WTC11 (cell line): ENCODE measurements at regions of chr12 and their contacts with region 1.

Region 1: GRCh38 chr12:52156736-52157565 is 34.9 kb downstream of the KRT80 start:
- DNase-seq: peak; percentile 94
- ATAC-seq: peak; percentile 88
- H3K4me3 Mint-ChIP-seq: no peak overlapping the region
- H3K27ac Mint-ChIP-seq: no peak overlapping the region
- H3K4me1 Mint-ChIP-seq: no peaks in the 10 kb centered on the region
- H3K27me3 Mint-ChIP-seq: no peaks in the 10 kb centered on the region
- CTCF ChIP-seq: peak; percentile 97

Region 2: DNA sequence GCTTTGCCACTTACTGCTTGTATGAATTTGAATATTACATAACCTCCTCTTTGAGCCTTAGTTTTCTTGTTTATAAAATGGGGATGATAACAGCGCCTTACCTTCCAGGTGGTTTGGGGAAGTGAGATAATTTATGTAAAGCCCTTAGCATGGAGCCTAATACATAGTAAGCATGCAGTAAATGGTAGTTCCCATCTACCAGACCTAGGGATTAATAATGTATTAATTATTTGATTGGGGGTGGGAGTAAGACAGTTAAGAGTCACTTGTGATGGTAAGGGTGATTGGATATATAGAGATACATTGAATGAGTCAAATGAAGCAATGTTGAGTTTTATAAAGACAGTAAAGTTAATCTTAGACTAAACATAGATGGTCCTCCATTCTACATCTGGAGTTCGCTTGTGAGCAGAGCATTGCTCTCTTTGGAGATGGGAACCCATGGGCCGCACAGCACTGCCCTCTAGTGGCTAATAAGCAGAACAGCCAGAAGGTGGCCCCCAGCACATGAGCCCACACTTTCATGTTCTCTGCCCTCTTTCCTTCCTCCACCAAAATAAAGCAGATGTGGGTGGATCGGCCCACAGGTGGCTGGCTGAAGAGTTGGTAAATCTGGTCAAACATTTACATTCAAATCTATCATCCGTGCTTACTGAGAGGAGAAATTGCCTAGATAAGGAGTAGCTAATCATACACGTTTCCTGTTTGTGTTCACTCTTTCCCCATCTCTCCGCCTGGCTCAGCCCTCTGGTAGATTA is 176.7 kb before region 1 on chr12:
- CTCF ChIA-PET with region 1: no interaction called
- POLR2A ChIA-PET with region 1: no interaction called
- DNase-seq: peak; percentile 68
- ATAC-seq: peak; percentile 96
- H3K4me3 Mint-ChIP-seq: no peak overlapping the region
- H3K27ac Mint-ChIP-seq: no peak overlapping the region
- H3K4me1 Mint-ChIP-seq: no peaks in the 10 kb centered on the region; the same call in 1 of the 2 replicates
- H3K27me3 Mint-ChIP-seq: no peaks in the 10 kb centered on the region
- CTCF ChIP-seq: peak; percentile 84

Region 3: DNA sequence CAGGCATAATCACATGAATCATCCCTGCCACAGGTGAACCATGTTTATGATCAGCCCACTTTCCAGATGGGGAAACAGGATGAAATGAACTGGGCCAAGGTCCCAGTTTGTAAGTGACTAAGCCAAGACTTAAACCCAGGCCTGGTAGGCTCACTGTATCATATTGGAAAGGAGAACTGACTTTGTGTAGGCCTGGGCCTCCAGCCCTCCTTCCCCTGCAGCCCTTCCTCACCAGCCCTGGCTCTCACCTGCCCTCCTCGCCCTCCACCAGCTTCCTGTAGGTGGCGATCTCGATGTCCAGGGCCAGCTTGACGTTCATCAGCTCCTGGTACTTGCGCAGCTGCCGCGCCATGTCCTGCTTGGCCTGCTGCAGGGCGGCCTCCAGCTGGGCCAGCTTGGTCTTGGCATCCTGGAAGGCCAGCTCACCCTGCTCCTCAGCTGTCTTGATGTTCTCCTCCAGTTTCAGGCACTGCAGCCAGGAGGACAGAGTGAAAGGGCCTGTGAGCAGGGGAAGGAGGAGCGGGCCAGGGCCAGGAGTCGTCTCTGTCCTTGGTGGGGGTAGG is 15.1 kb after region 1 on chr12:
- CTCF ChIA-PET with region 1: interaction called, 25 read pairs
- POLR2A ChIA-PET with region 1: no interaction called
- DNase-seq: peak; percentile 79
- ATAC-seq: peak; percentile 71
- H3K4me3 Mint-ChIP-seq: no peak overlapping the region
- H3K27ac Mint-ChIP-seq: no peak overlapping the region
- H3K4me1 Mint-ChIP-seq: peaks cover 9% of the 10 kb centered on the region
- H3K27me3 Mint-ChIP-seq: no peaks in the 10 kb centered on the region
- CTCF ChIP-seq: 0 out of 2 replicates have a peak, but pooled peaks have one; percentile 25

Region 4: GRCh38 chr12:52207895-52208294 is 50.9 kb after region 1 on chr12:
- CTCF ChIA-PET with region 1: interaction called, 60 read pairs
- POLR2A ChIA-PET with region 1: no interaction called
- DNase-seq: no peak
- ATAC-seq: no peak
- H3K4me3 Mint-ChIP-seq: no peak overlapping the region
- H3K27ac Mint-ChIP-seq: no peak overlapping the region
- H3K4me1 Mint-ChIP-seq: peaks cover 14% of the 10 kb centered on the region
- H3K27me3 Mint-ChIP-seq: no peaks in the 10 kb centered on the region
- CTCF ChIP-seq: no peak

Region 5: GRCh38 chr12:52230327-52231291 is 73.7 kb after region 1 on chr12:
- CTCF ChIA-PET with region 1: interaction called, 10 read pairs
- POLR2A ChIA-PET with region 1: no interaction called
- DNase-seq: no peak
- ATAC-seq: no peak
- H3K4me3 Mint-ChIP-seq: no peak overlapping the region
- H3K27ac Mint-ChIP-seq: no peak overlapping the region
- H3K4me1 Mint-ChIP-seq: peaks cover 36% of the 10 kb centered on the region
- H3K27me3 Mint-ChIP-seq: peaks cover 53% of the 10 kb centered on the region
- CTCF ChIP-seq: no peak

Region 6: GRCh38 chr12:52372216-52373154 is 215.5 kb after region 1 on chr12:
- CTCF ChIA-PET with region 1: interaction called, 21 read pairs
- POLR2A ChIA-PET with region 1: no interaction called
- DNase-seq: peak; percentile 81
- ATAC-seq: peak; percentile 91
- H3K4me3 Mint-ChIP-seq: no peak overlapping the region
- H3K27ac Mint-ChIP-seq: no peak overlapping the region
- H3K4me1 Mint-ChIP-seq: no peaks in the 10 kb centered on the region
- H3K27me3 Mint-ChIP-seq: no peaks in the 10 kb centered on the region
- CTCF ChIP-seq: peak; percentile 50; the same call in 1 of the 2 replicates